CD8-positive, alpha-beta memory T cell (primary cell): ENCODE measurements at regions of chr10 and their contacts with region 1.

Region 1: GRCh38 chr10:73886085-73886529 is 11.8 kb upstream of the CAMK2G start:
- DNase-seq: peak; percentile 44 to 77 (median 65)
- H3K4me3 ChIP-seq: no peak overlapping the region
- H3K4me3 Mint-ChIP-seq: no peak overlapping the region
- H3K27ac ChIP-seq: no peak overlapping the region
- H3K27ac Mint-ChIP-seq: peak overlapping the region in 1 of 8 donors; percentile 30
- H3K4me1 ChIP-seq: no peaks in the 10 kb centered on the region
- H3K4me1 Mint-ChIP-seq: peaks cover 0 to 12% (median 5%) of the 10 kb centered on the region in 3 donors
- H3K27me3 ChIP-seq: no peaks in the 10 kb centered on the region
- H3K27me3 Mint-ChIP-seq: peaks cover 0 to 3% of the 10 kb centered on the region in 2 donors

Region 2: GRCh38 chr10:73899423-73899822 is 13.3 kb after region 1 on chr10:
- CTCF ChIA-PET with region 1: interaction called, 14 read pairs
- POLR2A ChIA-PET with region 1: no interaction called
- DNase-seq: no peak
- H3K4me3 ChIP-seq: no peak overlapping the region
- H3K4me3 Mint-ChIP-seq: no peak overlapping the region
- H3K27ac ChIP-seq: no peak overlapping the region
- H3K27ac Mint-ChIP-seq: no peak overlapping the region
- H3K4me1 ChIP-seq: no peaks in the 10 kb centered on the region
- H3K4me1 Mint-ChIP-seq: no peaks in the 10 kb centered on the region
- H3K27me3 ChIP-seq: peaks cover 2% of the 10 kb centered on the region
- H3K27me3 Mint-ChIP-seq: peaks cover 9 to 26% of the 10 kb centered on the region in 2 donors

Region 3: DNA sequence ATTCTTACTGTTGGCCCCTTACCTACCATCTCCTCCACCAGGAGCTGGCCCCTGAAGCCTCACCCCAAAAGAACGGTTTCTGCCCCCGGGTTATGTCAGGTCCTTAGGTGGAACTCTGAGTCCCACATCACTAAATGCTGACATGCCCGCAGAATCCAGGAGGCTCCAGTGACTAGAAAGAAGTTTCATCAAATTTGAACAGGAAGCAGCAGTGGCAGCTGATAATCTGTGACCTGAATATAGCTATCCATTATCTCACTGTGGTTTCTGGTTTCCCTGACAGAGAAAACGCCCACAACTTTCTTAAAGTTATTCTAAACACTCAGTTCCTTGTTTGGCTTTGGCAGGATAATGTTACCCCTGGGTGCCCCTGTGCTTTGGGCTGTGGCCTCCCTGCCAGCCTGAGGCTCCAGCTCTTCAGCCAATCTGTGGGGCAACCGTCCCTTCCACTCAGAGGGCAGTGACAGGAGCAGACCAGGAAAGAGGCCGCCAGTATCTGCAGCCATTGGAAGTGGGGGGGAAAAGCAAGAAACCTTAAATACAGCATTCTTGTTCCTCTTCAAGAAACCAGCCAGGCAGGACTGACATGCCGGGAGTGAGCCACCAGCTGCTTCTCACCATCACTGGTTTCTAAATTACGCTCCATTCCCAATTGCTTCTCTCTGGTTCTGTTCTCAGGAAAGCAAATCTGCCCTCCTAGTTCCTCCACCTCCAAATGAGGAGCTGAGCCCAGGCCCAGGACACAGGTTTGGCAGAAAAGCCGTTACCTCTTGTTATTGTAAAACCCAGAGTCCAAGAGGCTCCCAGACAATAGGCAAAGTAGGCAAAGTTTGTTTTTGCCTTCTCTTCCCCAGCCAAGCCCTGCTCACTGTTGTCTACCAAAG is 70.6 kb after region 1 on chr10:
- CTCF ChIA-PET with region 1: interaction called, 15 read pairs
- POLR2A ChIA-PET with region 1: no interaction called
- DNase-seq: peak; percentile 10 to 68 (median 38)
- H3K4me3 ChIP-seq: peak overlapping the region; percentile 46
- H3K4me3 Mint-ChIP-seq: peak overlapping the region; percentile 69 to 95 (median 84)
- H3K27ac ChIP-seq: peak overlapping the region; percentile 67
- H3K27ac Mint-ChIP-seq: peak overlapping the region; percentile 67 to 98 (median 94)
- H3K4me1 ChIP-seq: peaks cover 51% of the 10 kb centered on the region
- H3K4me1 Mint-ChIP-seq: peaks cover 44 to 66% (median 65%) of the 10 kb centered on the region in 3 donors
- H3K27me3 ChIP-seq: no peaks in the 10 kb centered on the region
- H3K27me3 Mint-ChIP-seq: no peaks in the 10 kb centered on the region

Region 4: GRCh38 chr10:74035303-74035702 is 149.2 kb after region 1 on chr10:
- CTCF ChIA-PET with region 1: interaction called, 30 read pairs
- POLR2A ChIA-PET with region 1: no interaction called
- DNase-seq: peak in 1 of 5 donors; percentile 5
- H3K4me3 ChIP-seq: no peak overlapping the region
- H3K4me3 Mint-ChIP-seq: no peak overlapping the region
- H3K27ac ChIP-seq: no peak overlapping the region
- H3K27ac Mint-ChIP-seq: peak overlapping the region; percentile 1 to 88 (median 62)
- H3K4me1 ChIP-seq: peaks cover 17% of the 10 kb centered on the region
- H3K4me1 Mint-ChIP-seq: peaks cover 38 to 47% (median 39%) of the 10 kb centered on the region in 3 donors
- H3K27me3 ChIP-seq: no peaks in the 10 kb centered on the region
- H3K27me3 Mint-ChIP-seq: no peaks in the 10 kb centered on the region

Region 5: GRCh38 chr10:74081192-74081803 is 195.2 kb after region 1 on chr10:
- CTCF ChIA-PET with region 1: interaction called, 38 read pairs
- POLR2A ChIA-PET with region 1: no interaction called
- DNase-seq: peak in 4 of 5 donors; percentile 10 to 53 (median 26)
- H3K4me3 ChIP-seq: no peak overlapping the region
- H3K4me3 Mint-ChIP-seq: no peak overlapping the region
- H3K27ac ChIP-seq: no peak overlapping the region
- H3K27ac Mint-ChIP-seq: peak overlapping the region in 4 of 8 donors; percentile 8 to 74 (median 21)
- H3K4me1 ChIP-seq: peaks cover 12% of the 10 kb centered on the region
- H3K4me1 Mint-ChIP-seq: peaks cover 34 to 47% (median 39%) of the 10 kb centered on the region in 3 donors
- H3K27me3 ChIP-seq: no peaks in the 10 kb centered on the region
- H3K27me3 Mint-ChIP-seq: no peaks in the 10 kb centered on the region